Activated CD4-positive, alpha-beta memory T cell treated with anti-CD3 and anti-CD28 coated beads for 36 hours (primary cell): ENCODE measurements at regions of chr19 and their contacts with region 1.

Region 1: DNA sequence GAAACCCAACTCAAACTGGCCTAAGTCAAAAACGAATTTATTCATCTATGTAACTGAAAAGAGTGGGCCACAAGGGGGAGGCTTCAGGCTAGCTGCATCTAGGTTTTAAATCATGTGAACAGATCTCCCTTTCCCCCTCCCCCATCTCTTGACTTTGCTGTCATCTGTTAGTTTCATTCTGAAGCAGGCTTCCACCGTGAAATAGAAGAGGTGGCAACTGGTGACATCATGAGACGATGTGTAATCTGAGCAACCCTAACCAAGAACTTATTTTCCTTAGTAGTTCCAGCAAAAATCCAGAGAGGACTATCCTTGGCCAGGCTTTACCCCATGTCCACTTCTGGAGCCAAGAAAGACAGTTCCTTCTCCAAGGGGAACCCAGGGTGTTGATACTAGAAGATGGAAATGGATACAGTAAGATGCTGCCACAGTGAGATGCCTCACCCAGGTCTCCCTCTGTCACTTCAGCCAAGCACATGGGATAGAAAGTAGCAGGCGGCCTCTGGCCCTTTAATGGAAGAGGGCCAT is 9.4 kb downstream of the SAMD4B start:
- DNase-seq: peak; percentile 75
- H3K4me3 Mint-ChIP-seq: no peak overlapping the region
- H3K27ac Mint-ChIP-seq: peak overlapping the region; percentile 84
- H3K4me1 Mint-ChIP-seq: peaks cover 42% of the 10 kb centered on the region
- H3K27me3 Mint-ChIP-seq: no peaks in the 10 kb centered on the region

Region 2: GRCh38 chr19:39021063-39021462 is 330.5 kb before region 1 on chr19:
- CTCF ChIA-PET with region 1: no interaction called
- POLR2A ChIA-PET with region 1: no interaction called
- intact Hi-C with region 1: no loop called
- DNase-seq: no peak
- H3K4me3 Mint-ChIP-seq: no peak overlapping the region
- H3K27ac Mint-ChIP-seq: no peak overlapping the region
- H3K4me1 Mint-ChIP-seq: peaks cover 3% of the 10 kb centered on the region
- H3K27me3 Mint-ChIP-seq: peaks cover 14% of the 10 kb centered on the region

Region 3: DNA sequence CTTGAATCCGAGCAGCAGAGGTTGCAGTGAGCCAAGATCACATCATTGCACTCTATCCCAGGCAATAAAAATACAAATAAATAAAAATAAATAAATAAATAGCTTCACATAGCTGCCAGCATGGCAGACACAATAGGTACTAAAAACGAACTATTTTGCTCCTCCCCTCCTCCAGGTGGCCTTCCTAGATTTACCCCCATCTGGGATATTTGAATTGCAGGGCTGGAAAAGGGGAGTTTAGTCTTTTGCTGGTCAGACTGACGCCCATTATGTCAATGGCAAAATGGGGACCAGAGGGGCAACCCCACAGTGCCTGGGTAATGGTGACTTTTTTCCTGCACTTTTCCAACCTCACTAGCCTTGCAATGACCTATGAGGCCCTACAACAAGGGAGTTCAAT is 15.1 kb before region 1 on chr19:
- CTCF ChIA-PET with region 1: interaction called, 4 read pairs
- POLR2A ChIA-PET with region 1: no interaction called
- intact Hi-C with region 1: loop called (anchors 1 kb)
- DNase-seq: no peak
- H3K4me3 Mint-ChIP-seq: peak overlapping the region; percentile 100
- H3K27ac Mint-ChIP-seq: peak overlapping the region; percentile 98
- H3K4me1 Mint-ChIP-seq: peaks cover 58% of the 10 kb centered on the region
- H3K27me3 Mint-ChIP-seq: no peaks in the 10 kb centered on the region